Left ventricle myocardium inferior (tissue), 1 donor: ENCODE measurements at regions of chr16 and their contacts with region 1.

Region 1: GRCh38 chr16:832652-833336 is 32.3 kb upstream of the GNG13 start:
- DNase-seq: no peak
- H3K4me3 ChIP-seq: no peak overlapping the region
- H3K27ac ChIP-seq: no peak overlapping the region
- H3K4me1 ChIP-seq: no peaks in the 10 kb centered on the region
- H3K27me3 ChIP-seq: peaks cover 45% of the 10 kb centered on the region
- CTCF ChIP-seq: no peak

Region 2: GRCh38 chr16:1036726-1037393 is 204.1 kb after region 1 on chr16:
- intact Hi-C with region 1: loop called (anchors 10 kb)
- DNase-seq: no peak
- H3K4me3 ChIP-seq: no peak overlapping the region
- H3K27ac ChIP-seq: no peak overlapping the region
- H3K4me1 ChIP-seq: no peaks in the 10 kb centered on the region
- H3K27me3 ChIP-seq: peaks cover 65% of the 10 kb centered on the region
- CTCF ChIP-seq: no peak